GM10248 (cell line): ENCODE measurements at regions of chr5 and their contacts with region 1.

Region 1: GRCh38 chr5:178075840-178076548 is 37.3 kb upstream of the N4BP3 start:
- DNase-seq: peak; percentile 85
- CTCF ChIP-seq: peak; percentile 79

Region 2: DNA sequence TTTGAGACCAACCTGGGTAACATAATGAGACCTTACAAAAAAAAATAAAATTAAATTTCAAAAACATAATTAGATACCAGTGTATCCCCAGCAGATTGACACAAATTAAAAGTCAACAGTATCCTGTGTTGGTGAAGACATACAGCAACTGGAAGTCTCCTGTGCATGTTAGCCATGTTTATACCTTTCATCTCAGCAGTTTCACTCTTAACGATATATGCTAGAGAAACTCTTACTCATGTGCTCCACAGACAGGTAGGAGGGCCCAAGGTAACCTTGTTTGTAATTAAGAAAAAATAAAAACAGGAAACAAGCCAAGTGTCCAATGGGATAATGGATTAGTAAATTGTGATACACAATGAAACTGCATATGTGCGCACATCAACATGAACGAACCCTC is 12.7 kb before region 1 on chr5:
- CTCF ChIA-PET with region 1: interaction called, 20 read pairs
- POLR2A ChIA-PET with region 1: no interaction called
- DNase-seq: no peak
- CTCF ChIP-seq: no peak

Region 3: DNA sequence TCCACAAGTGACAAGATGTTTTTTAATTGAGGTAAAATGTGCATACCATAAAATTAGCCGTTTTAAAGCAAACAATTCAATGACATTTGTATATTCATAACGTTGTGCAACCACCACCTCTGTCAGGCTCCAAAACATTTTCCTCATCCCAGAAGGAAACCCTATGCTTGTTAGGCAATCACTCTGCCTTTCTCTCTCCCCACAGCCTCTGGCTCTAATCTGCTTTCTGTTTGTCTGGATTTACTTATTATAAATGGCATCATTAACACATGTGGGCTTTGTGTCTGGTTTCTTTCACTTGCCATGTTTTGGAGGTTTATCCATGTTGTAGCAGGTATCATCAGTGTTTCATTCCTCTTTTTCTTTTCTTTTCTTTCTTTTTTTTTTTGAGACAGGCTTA is 35.9 kb after region 1 on chr5:
- CTCF ChIA-PET with region 1: interaction called, 28 read pairs
- POLR2A ChIA-PET with region 1: no interaction called
- DNase-seq: no peak
- CTCF ChIP-seq: no peak

Region 4: GRCh38 chr5:178137991-178138390 is 62.0 kb after region 1 on chr5:
- CTCF ChIA-PET with region 1: interaction called, 155 read pairs
- POLR2A ChIA-PET with region 1: no interaction called
- DNase-seq: no peak
- CTCF ChIP-seq: no peak

Region 5: DNA sequence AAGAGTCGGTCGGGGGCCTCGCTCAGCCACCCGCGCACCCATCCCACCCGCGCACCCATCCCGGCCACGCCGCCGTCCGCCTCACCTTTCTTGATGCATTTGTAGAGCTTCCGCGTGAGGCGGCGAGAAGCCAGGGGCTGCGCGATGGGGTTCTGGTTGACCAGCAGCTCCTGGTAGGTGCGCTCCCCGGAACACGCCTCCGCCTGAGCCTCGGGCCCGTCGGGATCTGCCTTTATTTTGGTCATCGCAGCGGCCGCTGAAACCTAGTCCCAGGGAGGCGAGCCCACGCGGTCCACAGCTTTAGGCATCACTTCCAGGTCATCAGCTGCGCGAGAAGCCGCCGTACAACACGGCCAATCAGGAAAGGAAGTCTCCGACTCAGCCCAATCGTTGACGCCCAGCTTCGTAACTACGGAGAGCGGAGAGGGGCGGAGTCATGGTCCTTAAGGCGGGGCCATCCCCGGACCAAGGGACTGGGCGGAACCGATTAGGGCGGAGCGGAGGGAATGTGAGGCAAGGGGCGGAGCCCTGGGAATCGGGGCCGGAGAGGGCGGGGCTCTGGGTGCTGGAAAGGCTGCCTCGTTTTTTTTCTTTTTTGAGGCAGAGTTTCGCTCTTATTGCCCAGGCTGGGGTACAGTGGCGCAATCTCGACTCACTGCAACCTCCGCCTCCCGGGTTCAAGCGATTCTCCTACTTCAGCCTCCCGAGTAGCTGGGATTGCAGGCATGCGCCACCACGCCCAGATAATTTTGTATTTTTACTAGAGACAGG is 77.8 kb after region 1 on chr5 and contains the start of gene NHP2:
- CTCF ChIA-PET with region 1: interaction called, 155 read pairs
- POLR2A ChIA-PET with region 1: no interaction called
- DNase-seq: peak; percentile 98
- CTCF ChIP-seq: no peak

Region 6: DNA sequence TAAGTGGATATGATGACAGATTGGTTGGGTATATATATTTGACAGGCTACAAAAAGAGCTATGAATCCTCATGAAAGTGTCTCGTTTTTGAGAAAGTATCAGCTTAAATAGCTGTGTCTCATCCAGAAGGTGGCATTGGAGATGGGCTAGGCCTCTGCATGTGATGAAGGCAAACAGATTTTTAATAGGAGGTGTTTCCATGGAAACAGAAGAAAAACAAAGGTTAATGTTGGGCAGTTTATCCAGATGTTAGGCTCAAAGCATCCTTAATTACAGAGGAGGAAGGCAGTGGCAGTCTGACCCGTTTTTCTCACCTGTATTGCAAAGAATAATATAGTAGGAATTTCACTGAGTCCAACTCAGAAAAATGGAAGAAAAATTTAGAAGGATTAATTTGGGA is 95.0 kb after region 1 on chr5:
- CTCF ChIA-PET with region 1: interaction called, 25 read pairs
- POLR2A ChIA-PET with region 1: no interaction called
- DNase-seq: no peak
- CTCF ChIP-seq: no peak